Naive thymus-derived CD4-positive, alpha-beta T cell (primary cell): ENCODE measurements at regions of chr16 and their contacts with region 1.

Region 1: GRCh38 chr16:29900102-29900887 is at the start of gene ASPHD1:
- DNase-seq: peak; percentile 68 to 91 (median 79)
- ATAC-seq: peak; percentile 93
- H3K4me3 ChIP-seq: peak within 1 kb of the TSS; percentile 53
- H3K4me3 Mint-ChIP-seq: peak within 1 kb of the TSS; percentile 53 to 86 (median 72)
- H3K27ac ChIP-seq: no peak within 1 kb of the TSS
- H3K27ac Mint-ChIP-seq: no peak within 1 kb of the TSS
- H3K4me1 ChIP-seq: peaks cover 5% of the 10 kb centered on the region in 2 donors
- H3K4me1 Mint-ChIP-seq: peaks cover 4 to 19% (median 11%) of the 10 kb centered on the region in 7 donors
- H3K27me3 ChIP-seq: peaks cover 5 to 13% of the 10 kb centered on the region in 2 donors
- H3K27me3 Mint-ChIP-seq: peaks cover 16 to 35% (median 26%) of the 10 kb centered on the region in 5 donors
- total RNA-seq, gene ASPHD1: 0.27 TPM in 1 of 5 experiments, not detected in the others

Region 2: DNA sequence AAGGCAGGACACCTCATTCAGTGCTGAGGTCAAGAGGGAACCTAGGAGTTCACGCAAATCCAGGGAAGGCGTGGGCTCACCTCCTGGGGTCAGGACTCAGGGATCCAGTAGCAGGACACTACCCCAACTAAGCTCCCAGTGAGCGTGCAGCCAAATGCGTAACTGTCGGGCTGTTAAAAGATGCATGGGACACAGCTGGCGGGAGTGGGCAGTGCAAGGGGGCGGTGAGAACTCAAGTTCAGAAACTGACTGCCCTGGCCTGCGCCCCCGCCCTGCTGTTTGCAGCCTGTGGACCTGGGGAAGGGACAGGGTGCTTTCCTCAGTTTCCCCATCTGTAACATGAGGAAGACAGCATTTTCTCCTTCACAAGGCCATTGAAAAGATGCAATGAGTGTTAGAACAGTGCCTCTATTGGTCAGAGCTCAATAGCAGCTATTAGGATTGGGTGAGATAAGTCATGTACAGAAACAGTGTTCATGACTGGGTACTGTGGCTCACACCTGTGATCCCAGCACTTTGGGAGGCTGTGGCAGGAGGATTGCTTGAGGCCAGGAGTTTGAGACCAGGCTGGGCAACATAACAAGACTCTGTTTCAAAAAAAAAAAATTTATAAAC is 57.5 kb before region 1 on chr16:
- CTCF ChIA-PET with region 1: no interaction called
- POLR2A ChIA-PET with region 1: no interaction called
- intact Hi-C with region 1: no loop called
- DNase-seq: no peak
- ATAC-seq: no peak
- H3K4me3 ChIP-seq: no peak overlapping the region
- H3K4me3 Mint-ChIP-seq: no peak overlapping the region
- H3K27ac ChIP-seq: no peak overlapping the region
- H3K27ac Mint-ChIP-seq: peak overlapping the region; percentile 5 to 78 (median 53)
- H3K4me1 ChIP-seq: no peaks in the 10 kb centered on the region
- H3K4me1 Mint-ChIP-seq: peaks cover 0 to 8% (median 3%) of the 10 kb centered on the region in 7 donors
- H3K27me3 ChIP-seq: no peaks in the 10 kb centered on the region
- H3K27me3 Mint-ChIP-seq: no peaks in the 10 kb centered on the region

Region 3: GRCh38 chr16:29973384-29974246 is 73.3 kb after region 1 on chr16 and contains the start of gene TAOK2:
- CTCF ChIA-PET with region 1: no interaction called
- POLR2A ChIA-PET with region 1: interaction called, 3 read pairs
- intact Hi-C with region 1: loop called in 1 of 2 experiments (anchors 1 kb)
- DNase-seq: peak; percentile 83 to 98 (median 89)
- ATAC-seq: peak; percentile 97
- H3K4me3 ChIP-seq: peak within 1 kb of the TSS; percentile 98
- H3K4me3 Mint-ChIP-seq: peak within 1 kb of the TSS; percentile 80 to 97 (median 94)
- H3K27ac ChIP-seq: peak within 1 kb of the TSS; percentile 78
- H3K27ac Mint-ChIP-seq: peak within 1 kb of the TSS; percentile 77 to 93 (median 91)
- H3K4me1 ChIP-seq: peaks cover 20 to 23% of the 10 kb centered on the region in 2 donors
- H3K4me1 Mint-ChIP-seq: peaks cover 23 to 39% (median 37%) of the 10 kb centered on the region in 7 donors
- H3K27me3 ChIP-seq: no peaks in the 10 kb centered on the region
- H3K27me3 Mint-ChIP-seq: no peaks in the 10 kb centered on the region
- total RNA-seq, gene TAOK2: 19.4 to 48.5 (median 42.9) TPM